ENCODE measurements at regions of chr1 and their contacts with region 1.

Region 1: DNA sequence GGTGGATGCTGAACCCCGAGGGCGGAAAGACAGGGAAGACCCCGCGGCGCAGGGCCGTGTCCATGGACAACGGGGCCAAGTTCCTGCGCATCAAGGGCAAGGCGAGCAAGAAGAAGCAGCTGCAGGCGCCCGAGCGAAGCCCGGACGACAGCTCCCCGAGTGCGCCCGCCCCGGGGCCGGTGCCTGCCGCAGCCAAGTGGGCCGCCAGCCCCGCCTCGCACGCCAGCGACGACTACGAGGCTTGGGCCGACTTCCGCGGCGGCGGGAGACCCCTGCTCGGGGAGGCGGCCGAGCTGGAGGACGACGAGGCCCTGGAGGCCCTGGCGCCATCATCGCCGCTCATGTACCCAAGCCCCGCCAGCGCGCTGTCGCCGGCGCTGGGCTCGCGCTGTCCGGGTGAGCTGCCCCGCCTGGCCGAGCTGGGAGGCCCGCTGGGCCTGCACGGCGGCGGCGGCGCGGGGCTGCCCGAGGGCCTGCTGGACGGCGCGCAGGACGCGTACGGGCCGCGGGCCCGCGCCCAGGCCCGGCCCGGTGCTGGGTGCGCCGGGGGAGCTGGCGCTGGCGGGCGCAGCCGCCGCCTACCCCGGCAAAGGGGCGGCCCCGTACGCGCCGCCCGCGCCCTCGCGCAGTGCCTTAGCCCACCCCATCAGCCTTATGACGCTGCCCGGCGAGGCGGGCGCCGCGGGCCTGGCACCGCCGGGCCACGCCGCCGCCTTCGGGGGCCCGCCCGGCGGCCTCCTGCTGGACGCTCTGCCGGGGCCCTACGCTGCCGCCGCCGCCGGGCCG is 20.7 kb downstream of the FOXO6 start:
- DNase-seq: peak; percentile 63
- ATAC-seq: peak; percentile 65
- H3K4me3 Mint-ChIP-seq: peak overlapping the region; percentile 59
- H3K27ac Mint-ChIP-seq: no peak overlapping the region
- H3K4me1 Mint-ChIP-seq: peaks cover 11% of the 10 kb centered on the region
- H3K27me3 Mint-ChIP-seq: peaks cover 52% of the 10 kb centered on the region

Region 2: DNA sequence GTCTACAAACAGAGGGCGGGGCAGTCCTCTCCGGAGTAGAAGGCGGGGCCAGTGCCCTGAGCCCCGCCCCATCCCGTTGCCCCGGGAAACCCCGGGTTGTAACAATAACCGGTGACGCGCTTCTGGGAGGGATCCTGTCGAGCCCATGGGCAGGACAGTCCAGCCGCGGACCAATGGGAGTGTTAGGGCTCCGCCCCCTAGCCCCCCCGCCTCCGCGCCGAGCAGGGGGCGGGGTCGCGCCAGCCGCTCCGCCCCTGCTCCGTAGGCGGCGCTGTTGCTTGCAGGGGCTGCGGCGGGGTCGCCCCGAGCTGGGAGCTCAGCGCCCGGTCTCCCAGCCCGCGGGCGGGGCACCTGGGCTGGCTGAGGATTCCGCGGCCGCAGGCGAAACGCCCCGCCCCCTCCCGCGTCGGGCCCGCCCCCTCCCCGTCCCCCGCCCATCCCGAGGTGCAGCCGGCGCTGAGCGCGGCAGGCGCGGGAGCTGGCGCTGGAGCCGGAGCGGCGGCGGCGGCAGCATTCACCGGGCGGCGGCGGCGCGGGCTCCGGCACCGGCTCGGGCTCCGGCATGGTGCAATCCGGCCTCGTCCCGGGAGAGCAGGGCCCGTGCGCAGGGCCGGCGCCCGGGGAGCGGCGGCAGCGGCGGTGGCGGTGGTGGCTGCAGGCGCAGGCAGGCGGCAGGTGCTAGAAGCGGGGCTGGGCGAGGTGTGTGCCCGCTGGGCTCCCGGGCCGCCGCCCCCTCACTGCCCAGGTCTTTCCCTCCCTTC is 20.7 kb before region 1 on chr1 and contains the start of gene FOXO6:
- CTCF ChIA-PET with region 1: interaction called, 4 read pairs
- POLR2A ChIA-PET with region 1: interaction called, 4 read pairs
- intact Hi-C with region 1: loop called (anchors 1 to 2 kb)
- DNase-seq: peak; percentile 96
- ATAC-seq: peak; percentile 96
- H3K4me3 Mint-ChIP-seq: peak within 1 kb of the TSS; percentile 49
- H3K27ac Mint-ChIP-seq: no peak within 1 kb of the TSS
- H3K4me1 Mint-ChIP-seq: peaks cover 10% of the 10 kb centered on the region
- H3K27me3 Mint-ChIP-seq: peaks cover 24% of the 10 kb centered on the region
- total RNA-seq, gene FOXO6: 0.09 TPM in 1 of 2 experiments, not detected in the other

Region 3: GRCh38 chr1:41366455-41367287 is 15.2 kb before region 1 on chr1:
- CTCF ChIA-PET with region 1: interaction called, 4 read pairs
- POLR2A ChIA-PET with region 1: interaction called, 3 read pairs
- intact Hi-C with region 1: loop called (anchors 1 to 2 kb)
- DNase-seq: peak; percentile 60
- ATAC-seq: peak; percentile 26
- H3K4me3 Mint-ChIP-seq: peak overlapping the region; percentile 50
- H3K27ac Mint-ChIP-seq: peak overlapping the region; percentile 6
- H3K4me1 Mint-ChIP-seq: peaks cover 9% of the 10 kb centered on the region
- H3K27me3 Mint-ChIP-seq: peaks cover 31% of the 10 kb centered on the region

Region 4: GRCh38 chr1:41444246-41444645 is 62.4 kb after region 1 on chr1:
- CTCF ChIA-PET with region 1: no interaction called
- POLR2A ChIA-PET with region 1: no interaction called
- intact Hi-C with region 1: no loop called
- DNase-seq: peak; percentile 28
- ATAC-seq: no peak
- H3K4me3 Mint-ChIP-seq: no peak overlapping the region
- H3K27ac Mint-ChIP-seq: no peak overlapping the region
- H3K4me1 Mint-ChIP-seq: no peaks in the 10 kb centered on the region
- H3K27me3 Mint-ChIP-seq: peaks cover 3% of the 10 kb centered on the region

Region 5: GRCh38 chr1:41558761-41559171 is 176.9 kb after region 1 on chr1:
- CTCF ChIA-PET with region 1: no interaction called
- POLR2A ChIA-PET with region 1: no interaction called
- intact Hi-C with region 1: no loop called
- DNase-seq: no peak
- ATAC-seq: no peak
- H3K4me3 Mint-ChIP-seq: no peak overlapping the region
- H3K27ac Mint-ChIP-seq: no peak overlapping the region
- H3K4me1 Mint-ChIP-seq: peaks cover 3% of the 10 kb centered on the region
- H3K27me3 Mint-ChIP-seq: no peaks in the 10 kb centered on the region

Region 6: DNA sequence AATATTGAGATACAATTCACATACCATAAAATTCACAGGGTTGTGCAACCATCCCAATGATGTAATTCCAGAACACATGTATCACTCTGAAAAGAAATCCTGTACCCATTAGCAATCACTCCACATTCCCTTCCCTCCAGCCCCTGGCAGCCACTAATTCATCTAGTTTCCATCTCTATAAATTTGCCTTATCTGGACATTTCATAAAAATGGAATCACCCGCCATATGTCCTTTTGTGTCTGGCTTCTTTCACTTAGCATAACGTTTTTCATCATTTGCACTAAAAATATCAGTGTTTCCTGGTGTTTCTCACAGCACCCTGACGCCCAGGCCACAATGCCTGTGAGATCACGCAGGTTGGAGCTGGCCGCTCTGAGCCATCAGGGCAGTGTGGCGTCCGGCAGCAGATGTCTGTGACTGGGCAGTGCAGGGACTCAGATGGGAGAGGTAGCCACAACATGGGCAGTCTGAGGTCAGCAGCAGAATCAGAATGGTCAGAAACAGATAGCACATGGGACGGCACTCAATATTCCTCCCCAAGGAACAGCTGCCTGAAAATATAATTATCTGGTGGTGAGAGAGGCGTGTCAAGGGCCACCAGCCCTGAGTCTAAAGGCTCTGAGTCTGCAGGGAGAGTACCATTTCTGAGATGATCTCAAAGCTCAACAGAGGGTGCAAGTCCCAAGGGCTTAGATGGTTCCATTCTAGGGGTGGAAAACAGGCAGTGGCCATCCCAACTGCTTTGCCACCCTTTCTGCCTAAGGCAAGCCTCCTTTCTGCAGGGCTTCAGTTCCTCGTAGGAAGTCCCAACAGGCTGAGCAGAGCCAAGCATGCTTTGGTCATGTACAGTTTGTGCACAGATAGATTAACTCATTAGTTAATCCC is 232.0 kb after region 1 on chr1:
- CTCF ChIA-PET with region 1: no interaction called
- POLR2A ChIA-PET with region 1: no interaction called
- intact Hi-C with region 1: no loop called
- DNase-seq: no peak
- ATAC-seq: no peak
- H3K4me3 Mint-ChIP-seq: no peak overlapping the region
- H3K27ac Mint-ChIP-seq: peak overlapping the region; percentile 29
- H3K4me1 Mint-ChIP-seq: peaks cover 9% of the 10 kb centered on the region
- H3K27me3 Mint-ChIP-seq: no peaks in the 10 kb centered on the region

Measured in activated CD4-positive, alpha-beta T cell treated with anti-CD3 and anti-CD28 coated beads for 36 hours (primary cell).